ENCODE measurements at regions of chr1 and their contacts with region 1.

Region 1: GRCh38 chr1:99969729-99970621 is at the start of gene SLC35A3:
- DNase-seq: peak; percentile 88
- ATAC-seq: peak; percentile 96
- total RNA-seq, gene SLC35A3: 9.5 TPM

Region 2: GRCh38 chr1:99786751-99787501 is 183.0 kb before region 1 on chr1:
- intact Hi-C with region 1: no loop called
- DNase-seq: no peak
- ATAC-seq: no peak

Region 3: DNA sequence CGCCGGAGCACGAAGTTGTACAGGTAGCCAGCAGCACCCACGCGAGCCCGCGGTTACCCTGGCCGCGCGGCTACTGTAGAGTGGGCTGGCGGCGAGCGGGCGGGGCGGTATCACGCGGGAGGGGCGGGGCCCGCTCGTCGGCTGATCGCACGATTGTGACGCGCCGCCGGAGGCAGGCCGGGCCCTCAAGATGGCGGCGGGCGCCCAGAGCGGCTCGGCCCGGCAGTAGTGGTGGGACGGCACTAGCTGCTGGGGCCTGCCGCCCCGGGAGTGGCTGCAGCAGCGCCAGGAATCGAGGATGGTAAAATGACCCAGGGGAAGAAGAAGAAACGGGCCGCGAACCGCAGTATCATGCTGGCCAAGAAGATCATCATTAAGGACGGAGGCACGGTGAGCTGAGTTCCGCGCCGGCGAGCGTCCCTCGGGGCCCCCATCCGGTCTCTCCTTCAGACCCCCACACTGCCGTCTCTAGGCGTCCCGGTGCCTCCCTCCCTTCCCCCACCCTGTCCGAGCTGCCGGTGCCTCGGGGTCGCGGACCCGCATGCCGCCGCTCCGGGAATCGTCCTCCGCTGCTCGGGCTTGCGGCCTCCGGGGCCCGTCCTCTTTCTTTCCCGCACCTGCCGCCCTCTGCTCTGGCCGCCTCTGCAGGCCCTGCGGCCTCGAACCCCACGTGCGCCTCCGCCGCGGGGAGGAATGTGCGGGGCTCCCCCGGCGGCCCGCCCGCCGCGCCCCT is 68.1 kb after region 1 on chr1:
- intact Hi-C with region 1: loop called (anchors 5 kb)
- DNase-seq: peak; percentile 97
- ATAC-seq: peak; percentile 100